ENCODE measurements at regions of chr3 and their contacts with region 1.

Region 1: GRCh38 chr3:108589146-108589997 is at the starts of genes CIP2A and DZIP3:
- DNase-seq: peak; percentile 95 to 97
- H3K4me3 ChIP-seq: peak within 1 kb of the TSS; percentile 95
- H3K4me3 Mint-ChIP-seq: peak within 1 kb of the TSS; percentile 88
- H3K27ac Mint-ChIP-seq: peak within 1 kb of the TSS; percentile 98
- H3K4me1 ChIP-seq: no peaks in the 10 kb centered on the region
- H3K4me1 Mint-ChIP-seq: peaks cover 8% of the 10 kb centered on the region
- H3K27me3 ChIP-seq: no peaks in the 10 kb centered on the region
- H3K27me3 Mint-ChIP-seq: no peaks in the 10 kb centered on the region
- CTCF ChIP-seq: no peak
- total RNA-seq, gene CIP2A: 26.3 and 26.9 TPM in 2 replicates
- total RNA-seq, gene DZIP3: 20.9 and 21.2 TPM in 2 replicates

Region 2: GRCh38 chr3:108322352-108322751 is 267.0 kb before region 1 on chr3:
- CTCF ChIA-PET with region 1: no interaction called
- POLR2A ChIA-PET with region 1: no interaction called
- intact Hi-C with region 1: no loop called
- DNase-seq: no peak
- H3K4me3 ChIP-seq: no peak overlapping the region
- H3K4me3 Mint-ChIP-seq: no peak overlapping the region
- H3K27ac Mint-ChIP-seq: no peak overlapping the region
- H3K4me1 ChIP-seq: peaks cover 14% of the 10 kb centered on the region
- H3K4me1 Mint-ChIP-seq: peaks cover 12% of the 10 kb centered on the region
- H3K27me3 ChIP-seq: no peaks in the 10 kb centered on the region
- H3K27me3 Mint-ChIP-seq: no peaks in the 10 kb centered on the region
- CTCF ChIP-seq: peak in 1 of 2 experiments; percentile 19

Region 3: GRCh38 chr3:108552267-108553159 is 36.9 kb before region 1 on chr3:
- CTCF ChIA-PET with region 1: no interaction called
- POLR2A ChIA-PET with region 1: interaction called, 4 read pairs
- intact Hi-C with region 1: loop called (anchors 1 kb)
- DNase-seq: peak in 1 of 2 experiments; percentile 40
- H3K4me3 ChIP-seq: no peak overlapping the region
- H3K4me3 Mint-ChIP-seq: no peak overlapping the region
- H3K27ac Mint-ChIP-seq: no peak overlapping the region
- H3K4me1 ChIP-seq: peaks cover 36% of the 10 kb centered on the region
- H3K4me1 Mint-ChIP-seq: peaks cover 22% of the 10 kb centered on the region
- H3K27me3 ChIP-seq: no peaks in the 10 kb centered on the region
- H3K27me3 Mint-ChIP-seq: no peaks in the 10 kb centered on the region
- CTCF ChIP-seq: peak; percentile 27 to 36

Region 4: GRCh38 chr3:108602249-108602934 is 13.0 kb after region 1 on chr3:
- CTCF ChIA-PET with region 1: no interaction called
- POLR2A ChIA-PET with region 1: interaction called, 12 read pairs
- intact Hi-C with region 1: no loop called
- DNase-seq: peak in 1 of 2 experiments; percentile 8
- H3K4me3 ChIP-seq: no peak overlapping the region
- H3K4me3 Mint-ChIP-seq: no peak overlapping the region
- H3K27ac Mint-ChIP-seq: peak overlapping the region; percentile 31
- H3K4me1 ChIP-seq: peaks cover 20% of the 10 kb centered on the region
- H3K4me1 Mint-ChIP-seq: peaks cover 12% of the 10 kb centered on the region
- H3K27me3 ChIP-seq: no peaks in the 10 kb centered on the region
- H3K27me3 Mint-ChIP-seq: no peaks in the 10 kb centered on the region
- CTCF ChIP-seq: no peak

Region 5: DNA sequence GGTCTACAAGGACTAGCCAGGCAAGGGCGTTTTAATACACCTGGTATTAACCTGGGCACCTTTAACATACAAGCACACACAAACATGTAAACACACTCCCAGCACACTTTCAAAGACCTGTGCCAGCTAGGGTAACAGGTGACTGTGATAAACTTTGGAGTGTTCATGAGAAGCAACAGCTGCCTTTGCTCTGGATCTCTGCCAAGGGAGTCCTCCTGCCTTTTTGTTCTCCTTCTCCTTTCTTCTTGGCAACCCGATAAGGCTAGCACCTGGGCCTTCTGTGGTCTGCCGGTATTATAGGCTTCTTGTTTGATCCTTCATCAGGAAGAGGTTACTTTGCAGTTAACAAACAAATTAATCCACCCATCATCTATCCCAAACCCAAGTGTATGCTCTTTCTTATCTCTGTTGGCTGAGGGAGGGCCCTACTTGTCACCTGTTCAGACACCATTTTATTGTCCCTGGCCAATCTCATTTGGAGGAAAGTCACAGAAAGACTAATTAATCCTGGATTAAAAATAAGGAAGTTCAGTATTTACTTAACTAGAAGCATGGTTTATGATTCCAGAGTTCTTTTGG is 168.1 kb after region 1 on chr3 and contains the start of gene RETNLB:
- CTCF ChIA-PET with region 1: no interaction called
- POLR2A ChIA-PET with region 1: no interaction called
- intact Hi-C with region 1: no loop called
- DNase-seq: no peak
- H3K4me3 ChIP-seq: no peak within 1 kb of the TSS
- H3K4me3 Mint-ChIP-seq: no peak within 1 kb of the TSS
- H3K27ac Mint-ChIP-seq: no peak within 1 kb of the TSS
- H3K4me1 ChIP-seq: no peaks in the 10 kb centered on the region
- H3K4me1 Mint-ChIP-seq: no peaks in the 10 kb centered on the region
- H3K27me3 ChIP-seq: no peaks in the 10 kb centered on the region
- H3K27me3 Mint-ChIP-seq: no peaks in the 10 kb centered on the region
- CTCF ChIP-seq: no peak
- total RNA-seq, gene RETNLB: not detected in 2 replicates

Measured in Caco-2 (cell line).